Heart left ventricle (tissue), 16 donors: ENCODE measurements at regions of chr20 and their contacts with region 1.

Region 1: GRCh38 chr20:25129908-25130307 is 48.0 kb upstream of the VSX1 start:
- DNase-seq: no peak
- ATAC-seq: no peak
- H3K4me3 ChIP-seq: no peak overlapping the region
- H3K27ac ChIP-seq: no peak overlapping the region
- H3K4me1 ChIP-seq: no peaks in the 10 kb centered on the region
- H3K27me3 ChIP-seq: no peaks in the 10 kb centered on the region
- CTCF ChIP-seq: no peak
- POLR2A ChIP-seq: no peak

Region 2: GRCh38 chr20:24763386-24764026 is 366.4 kb before region 1 on chr20:
- intact Hi-C with region 1: no loop called
- DNase-seq: no peak
- ATAC-seq: no peak
- H3K4me3 ChIP-seq: no peak overlapping the region
- H3K27ac ChIP-seq: no peak overlapping the region
- H3K4me1 ChIP-seq: no peaks in the 10 kb centered on the region
- H3K27me3 ChIP-seq: peaks cover 0 to 7% (median 0%) of the 10 kb centered on the region in 9 donors
- CTCF ChIP-seq: no peak
- POLR2A ChIP-seq: no peak

Region 3: GRCh38 chr20:25165128-25165527 is 35.2 kb after region 1 on chr20:
- intact Hi-C with region 1: loop called in 1 of 10 experiments (anchors 5 kb)
- DNase-seq: no peak
- ATAC-seq: no peak
- H3K4me3 ChIP-seq: no peak overlapping the region
- H3K27ac ChIP-seq: no peak overlapping the region
- H3K4me1 ChIP-seq: no peaks in the 10 kb centered on the region
- H3K27me3 ChIP-seq: peaks cover 0 to 15% (median 0%) of the 10 kb centered on the region in 9 donors
- CTCF ChIP-seq: no peak
- POLR2A ChIP-seq: no peak